ENCODE measurements at regions of chr16 and their contacts with region 1.

Region 1: DNA sequence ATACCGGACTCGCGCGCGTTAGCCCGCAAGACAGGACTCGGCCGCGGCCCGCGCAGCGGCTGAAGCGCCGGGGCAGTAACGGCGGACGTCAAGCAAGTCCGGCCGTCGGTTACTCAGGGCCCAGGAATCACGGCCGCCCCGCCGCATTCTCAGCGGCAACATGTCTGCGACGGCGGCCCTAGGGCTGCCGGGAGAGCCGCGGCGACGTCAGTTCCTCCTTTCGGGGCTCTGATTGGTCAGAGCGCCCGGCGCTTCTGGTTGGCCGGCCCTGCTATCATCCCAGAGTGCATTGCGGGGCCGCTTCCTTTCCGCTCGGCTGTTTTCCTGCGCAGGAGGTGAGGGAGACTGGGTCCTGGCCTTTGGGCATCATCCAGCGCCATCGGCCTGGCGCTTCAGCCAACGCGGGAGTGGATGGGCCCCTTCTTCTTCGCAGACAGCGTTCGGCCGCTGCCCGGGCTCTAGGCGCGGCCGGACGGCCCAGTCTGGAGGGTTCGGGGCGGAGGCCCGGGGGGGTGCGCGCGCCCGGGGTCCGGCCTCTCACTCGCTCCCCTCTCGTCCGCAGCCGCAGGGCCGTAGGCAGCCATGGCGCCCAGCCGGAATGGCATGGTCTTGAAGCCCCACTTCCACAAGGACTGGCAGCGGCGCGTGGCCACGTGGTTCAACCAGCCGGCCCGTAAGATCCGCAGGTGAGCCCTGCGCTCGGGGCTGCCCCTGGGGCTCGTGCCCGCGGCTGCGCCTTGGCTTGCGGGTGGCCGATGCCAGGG is at the start of gene RPL13:
- DNase-seq: peak; percentile 86 to 97 (median 91)
- ATAC-seq: peak; percentile 88
- H3K4me3 ChIP-seq: peak within 1 kb of the TSS; percentile 75
- H3K4me3 Mint-ChIP-seq: peak within 1 kb of the TSS; percentile 97
- H3K27ac ChIP-seq: peak within 1 kb of the TSS; percentile 82 to 90
- H3K27ac Mint-ChIP-seq: peak within 1 kb of the TSS; percentile 99
- H3K4me1 ChIP-seq: peaks cover 68% of the 10 kb centered on the region
- H3K4me1 Mint-ChIP-seq: peaks cover 56% of the 10 kb centered on the region
- H3K27me3 ChIP-seq: peaks cover 0 to 3% of the 10 kb centered on the region in 2 experiments
- H3K27me3 Mint-ChIP-seq: no peaks in the 10 kb centered on the region
- CTCF ChIP-seq: no peak
- total RNA-seq, gene RPL13: 4,971 to 5,051 TPM

Region 2: GRCh38 chr16:89246903-89247733 is 313.4 kb before region 1 on chr16:
- CTCF ChIA-PET with region 1: no interaction called
- POLR2A ChIA-PET with region 1: interaction called, 3 read pairs
- intact Hi-C with region 1: loop called in 1 of 2 experiments (anchors 1 kb)
- DNase-seq: peak; percentile 91 to 100 (median 96)
- ATAC-seq: peak; percentile 91
- H3K4me3 ChIP-seq: peak overlapping the region; percentile 35
- H3K4me3 Mint-ChIP-seq: peak overlapping the region; percentile 82
- H3K27ac ChIP-seq: no peak overlapping the region
- H3K27ac Mint-ChIP-seq: peak overlapping the region; percentile 72
- H3K4me1 ChIP-seq: peaks cover 27% of the 10 kb centered on the region
- H3K4me1 Mint-ChIP-seq: peaks cover 6% of the 10 kb centered on the region
- H3K27me3 ChIP-seq: no peaks in the 10 kb centered on the region
- H3K27me3 Mint-ChIP-seq: no peaks in the 10 kb centered on the region
- CTCF ChIP-seq: no peak

Region 3: DNA sequence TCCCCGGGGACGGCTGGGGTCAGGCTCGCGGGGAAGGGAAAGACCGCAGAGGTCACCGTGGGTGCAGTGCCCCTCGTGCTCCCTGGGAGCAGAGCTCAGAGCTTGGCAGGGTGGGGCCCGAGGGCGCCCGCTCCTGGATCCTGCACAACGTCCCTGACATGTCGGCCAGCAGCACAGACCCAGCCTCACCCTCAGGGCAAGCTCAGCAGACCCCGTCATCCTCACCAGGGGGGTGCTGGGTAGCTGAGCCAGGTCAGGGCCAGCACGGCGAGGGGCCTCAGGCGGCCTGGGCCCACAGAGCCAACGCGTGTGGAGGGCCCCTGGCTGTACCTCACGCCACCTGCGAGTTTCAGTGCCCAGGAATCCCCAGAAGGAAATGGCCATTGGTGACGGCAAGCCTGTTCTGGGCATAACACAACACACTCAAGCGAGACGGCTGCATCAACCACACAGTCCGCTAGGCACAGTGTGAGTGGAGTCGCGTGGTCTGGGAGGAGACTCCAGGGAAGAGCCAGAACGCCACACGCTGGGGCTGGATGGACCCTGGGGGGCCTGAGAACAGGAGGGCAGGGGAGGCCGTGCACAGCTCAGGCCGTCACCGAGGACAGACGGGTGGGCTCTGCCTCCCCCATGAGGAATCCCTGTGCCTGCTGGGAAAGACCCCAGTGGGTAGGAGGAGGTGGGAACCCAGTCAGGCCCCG is 282.8 kb before region 1 on chr16:
- CTCF ChIA-PET with region 1: no interaction called
- POLR2A ChIA-PET with region 1: no interaction called
- intact Hi-C with region 1: no loop called
- DNase-seq: no peak
- ATAC-seq: no peak
- H3K4me3 ChIP-seq: no peak overlapping the region
- H3K4me3 Mint-ChIP-seq: no peak overlapping the region
- H3K27ac ChIP-seq: no peak overlapping the region
- H3K27ac Mint-ChIP-seq: peak overlapping the region; percentile 36
- H3K4me1 ChIP-seq: no peaks in the 10 kb centered on the region
- H3K4me1 Mint-ChIP-seq: no peaks in the 10 kb centered on the region
- H3K27me3 ChIP-seq: no peaks in the 10 kb centered on the region
- H3K27me3 Mint-ChIP-seq: no peaks in the 10 kb centered on the region
- CTCF ChIP-seq: no peak

Region 4: DNA sequence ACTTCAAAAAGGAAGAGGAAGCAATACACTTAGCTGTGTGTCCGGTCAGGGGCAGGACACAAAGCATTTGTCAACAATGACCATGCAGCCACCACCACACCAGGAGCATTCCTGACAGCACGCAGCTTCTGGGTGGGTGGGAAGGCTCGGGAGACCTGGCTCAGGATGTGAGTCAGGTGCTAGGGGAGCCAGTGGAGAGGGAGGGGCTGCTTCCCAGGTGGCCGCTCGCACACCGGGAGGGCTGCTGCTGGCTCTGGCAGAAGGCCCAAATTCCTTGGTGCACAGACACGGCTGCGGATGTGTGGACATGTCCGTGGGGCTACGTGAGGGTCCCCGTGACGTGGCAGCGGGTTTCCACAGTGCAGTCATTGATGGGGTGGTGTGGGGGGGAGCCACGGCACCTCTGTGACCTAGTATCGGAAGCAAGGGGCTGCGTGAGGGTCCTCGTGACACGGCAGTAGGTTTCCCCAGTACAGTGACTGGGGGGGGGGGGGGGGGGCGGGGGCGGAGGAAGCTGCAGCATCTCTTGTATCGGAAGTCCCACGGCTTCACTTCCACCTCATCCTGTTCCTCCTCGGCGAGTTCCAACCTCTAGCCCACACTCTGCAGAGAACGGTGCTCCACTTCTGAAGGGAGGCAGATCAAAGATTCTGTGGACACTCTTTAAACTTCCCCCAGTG is 230.2 kb before region 1 on chr16:
- CTCF ChIA-PET with region 1: interaction called, 6 read pairs
- POLR2A ChIA-PET with region 1: no interaction called
- intact Hi-C with region 1: loop called (anchors 1 to 2 kb)
- DNase-seq: peak in 6 of 14 experiments; percentile 32 to 84 (median 72)
- ATAC-seq: peak; percentile 67
- H3K4me3 ChIP-seq: peak overlapping the region; percentile 13
- H3K4me3 Mint-ChIP-seq: peak overlapping the region; percentile 10
- H3K27ac ChIP-seq: peak overlapping the region; percentile 60 to 67
- H3K27ac Mint-ChIP-seq: peak overlapping the region; percentile 80
- H3K4me1 ChIP-seq: peaks cover 82% of the 10 kb centered on the region
- H3K4me1 Mint-ChIP-seq: peaks cover 84% of the 10 kb centered on the region
- H3K27me3 ChIP-seq: no peaks in the 10 kb centered on the region
- H3K27me3 Mint-ChIP-seq: no peaks in the 10 kb centered on the region
- CTCF ChIP-seq: no peak

Region 5: GRCh38 chr16:89453501-89454321 is 106.8 kb before region 1 on chr16:
- CTCF ChIA-PET with region 1: no interaction called
- POLR2A ChIA-PET with region 1: no interaction called
- intact Hi-C with region 1: no loop called
- DNase-seq: peak in 2 of 14 experiments; percentile 50 to 64
- ATAC-seq: peak; percentile 23
- H3K4me3 ChIP-seq: no peak overlapping the region
- H3K4me3 Mint-ChIP-seq: peak overlapping the region; percentile 27
- H3K27ac ChIP-seq: no peak overlapping the region
- H3K27ac Mint-ChIP-seq: peak overlapping the region; percentile 52
- H3K4me1 ChIP-seq: peaks cover 84% of the 10 kb centered on the region
- H3K4me1 Mint-ChIP-seq: peaks cover 81% of the 10 kb centered on the region
- H3K27me3 ChIP-seq: no peaks in the 10 kb centered on the region
- H3K27me3 Mint-ChIP-seq: no peaks in the 10 kb centered on the region
- CTCF ChIP-seq: no peak

Region 6: DNA sequence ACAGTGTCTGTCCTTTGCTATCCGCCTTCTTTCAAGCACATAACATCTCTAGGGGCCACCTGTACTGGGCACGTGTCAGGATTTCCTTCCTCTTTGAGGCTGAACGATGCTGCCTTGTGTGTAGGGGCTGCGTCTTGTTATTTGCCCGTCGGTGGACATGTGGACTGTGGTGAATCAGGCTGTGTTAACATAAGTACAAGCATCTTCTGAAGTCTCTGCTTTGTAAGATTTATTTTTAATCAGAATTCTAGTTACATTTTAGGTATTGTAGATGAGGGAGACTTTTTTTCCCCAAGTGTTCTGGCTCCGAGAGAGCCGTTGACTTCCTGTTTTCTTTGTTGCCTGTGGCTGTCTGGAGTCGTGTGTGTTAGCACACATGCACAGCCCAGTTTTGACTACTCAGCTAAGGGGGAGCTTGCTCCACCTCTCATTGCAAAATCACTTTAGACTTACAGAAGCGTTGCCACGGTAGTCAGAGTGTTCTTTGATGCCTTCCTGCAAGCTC is 26.3 kb before region 1 on chr16:
- CTCF ChIA-PET with region 1: interaction called, 8 read pairs
- POLR2A ChIA-PET with region 1: interaction called, 7 read pairs
- intact Hi-C with region 1: loop called in 1 of 2 experiments (anchors 1 kb)
- DNase-seq: peak; percentile 25 to 81 (median 48)
- ATAC-seq: peak; percentile 96
- H3K4me3 ChIP-seq: no peak overlapping the region
- H3K4me3 Mint-ChIP-seq: peak overlapping the region; percentile 59
- H3K27ac ChIP-seq: peak overlapping the region; percentile 21 to 51
- H3K27ac Mint-ChIP-seq: peak overlapping the region; percentile 92
- H3K4me1 ChIP-seq: peaks cover 34% of the 10 kb centered on the region
- H3K4me1 Mint-ChIP-seq: peaks cover 23% of the 10 kb centered on the region
- H3K27me3 ChIP-seq: no peaks in the 10 kb centered on the region
- H3K27me3 Mint-ChIP-seq: no peaks in the 10 kb centered on the region
- CTCF ChIP-seq: no peak

Region 7: DNA sequence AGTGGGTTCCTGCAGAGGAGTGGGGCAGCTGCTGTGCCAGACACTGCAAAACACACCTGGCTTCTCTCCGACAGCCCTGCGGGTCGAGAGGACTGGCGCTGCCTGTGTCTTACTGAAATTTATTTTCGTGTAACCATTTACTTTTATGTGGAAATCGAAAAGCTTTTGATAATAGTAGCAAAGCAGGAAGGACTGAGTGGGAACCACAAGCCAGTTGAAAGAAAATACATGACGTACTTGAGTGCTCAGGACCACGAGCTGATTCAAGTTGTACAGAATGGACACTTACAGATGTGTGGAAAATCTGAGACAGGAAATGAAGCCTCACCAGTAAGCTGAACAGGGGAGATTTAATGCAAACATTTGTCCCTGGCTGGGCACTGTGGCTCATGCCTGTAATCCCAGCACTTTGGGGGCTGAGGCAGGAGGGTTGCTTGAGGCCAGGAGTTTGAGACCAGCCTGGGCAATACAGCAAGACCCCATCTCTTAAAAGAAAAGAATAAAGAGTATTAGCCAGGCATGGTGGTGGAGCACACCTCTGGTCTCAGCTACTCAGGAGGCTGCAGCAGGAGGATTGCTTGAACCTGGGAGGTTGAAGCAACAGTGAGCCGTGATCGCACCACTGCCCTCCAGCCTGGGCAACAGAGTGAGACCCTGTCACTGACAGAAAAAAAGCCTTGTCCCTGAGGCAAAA is 11.4 kb before region 1 on chr16:
- CTCF ChIA-PET with region 1: interaction called, 7 read pairs
- POLR2A ChIA-PET with region 1: interaction called, 11 read pairs
- intact Hi-C with region 1: no loop called
- DNase-seq: peak in 6 of 14 experiments; percentile 17 to 67 (median 42)
- ATAC-seq: peak; percentile 87
- H3K4me3 ChIP-seq: no peak overlapping the region
- H3K4me3 Mint-ChIP-seq: peak overlapping the region; percentile 74
- H3K27ac ChIP-seq: peak overlapping the region in 1 of 2 donors; percentile 36
- H3K27ac Mint-ChIP-seq: peak overlapping the region; percentile 91
- H3K4me1 ChIP-seq: peaks cover 19% of the 10 kb centered on the region
- H3K4me1 Mint-ChIP-seq: peaks cover 15% of the 10 kb centered on the region
- H3K27me3 ChIP-seq: no peaks in the 10 kb centered on the region
- H3K27me3 Mint-ChIP-seq: no peaks in the 10 kb centered on the region
- CTCF ChIP-seq: no peak

Region 8: DNA sequence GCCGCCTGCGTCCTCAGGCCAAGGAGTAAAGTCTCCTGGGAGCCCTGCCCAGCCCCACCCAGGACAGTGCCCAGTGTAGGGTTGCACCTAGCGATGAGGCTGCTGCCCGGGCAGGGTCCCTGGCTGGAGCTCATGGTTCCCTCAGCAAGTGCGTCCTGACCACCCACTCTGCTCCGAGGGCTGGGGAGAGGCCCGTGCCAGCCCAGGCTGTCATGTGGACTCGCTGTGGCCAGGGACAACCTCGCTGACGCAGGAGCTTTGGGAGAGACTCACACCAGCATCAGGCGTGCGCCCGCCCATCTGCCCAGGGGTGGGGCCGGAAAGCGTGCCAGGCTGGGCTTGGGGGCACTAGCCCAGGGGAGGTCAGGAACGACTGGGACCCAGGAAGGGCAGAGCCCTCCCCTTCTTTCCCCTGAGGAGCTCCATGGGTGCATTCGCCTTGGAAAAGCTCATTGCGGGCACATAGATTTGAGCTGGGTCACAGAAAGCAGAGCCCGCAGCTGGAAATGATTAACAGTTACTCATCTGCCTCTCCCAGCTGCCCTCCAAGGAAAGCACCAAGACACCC is 72.6 kb after region 1 on chr16:
- CTCF ChIA-PET with region 1: no interaction called
- POLR2A ChIA-PET with region 1: no interaction called
- intact Hi-C with region 1: no loop called
- DNase-seq: no peak
- ATAC-seq: no peak
- H3K4me3 ChIP-seq: no peak overlapping the region
- H3K4me3 Mint-ChIP-seq: no peak overlapping the region
- H3K27ac ChIP-seq: no peak overlapping the region
- H3K27ac Mint-ChIP-seq: no peak overlapping the region
- H3K4me1 ChIP-seq: no peaks in the 10 kb centered on the region
- H3K4me1 Mint-ChIP-seq: no peaks in the 10 kb centered on the region
- H3K27me3 ChIP-seq: peaks cover 0 to 9% of the 10 kb centered on the region in 2 experiments
- H3K27me3 Mint-ChIP-seq: no peaks in the 10 kb centered on the region
- CTCF ChIP-seq: no peak

Region 9: DNA sequence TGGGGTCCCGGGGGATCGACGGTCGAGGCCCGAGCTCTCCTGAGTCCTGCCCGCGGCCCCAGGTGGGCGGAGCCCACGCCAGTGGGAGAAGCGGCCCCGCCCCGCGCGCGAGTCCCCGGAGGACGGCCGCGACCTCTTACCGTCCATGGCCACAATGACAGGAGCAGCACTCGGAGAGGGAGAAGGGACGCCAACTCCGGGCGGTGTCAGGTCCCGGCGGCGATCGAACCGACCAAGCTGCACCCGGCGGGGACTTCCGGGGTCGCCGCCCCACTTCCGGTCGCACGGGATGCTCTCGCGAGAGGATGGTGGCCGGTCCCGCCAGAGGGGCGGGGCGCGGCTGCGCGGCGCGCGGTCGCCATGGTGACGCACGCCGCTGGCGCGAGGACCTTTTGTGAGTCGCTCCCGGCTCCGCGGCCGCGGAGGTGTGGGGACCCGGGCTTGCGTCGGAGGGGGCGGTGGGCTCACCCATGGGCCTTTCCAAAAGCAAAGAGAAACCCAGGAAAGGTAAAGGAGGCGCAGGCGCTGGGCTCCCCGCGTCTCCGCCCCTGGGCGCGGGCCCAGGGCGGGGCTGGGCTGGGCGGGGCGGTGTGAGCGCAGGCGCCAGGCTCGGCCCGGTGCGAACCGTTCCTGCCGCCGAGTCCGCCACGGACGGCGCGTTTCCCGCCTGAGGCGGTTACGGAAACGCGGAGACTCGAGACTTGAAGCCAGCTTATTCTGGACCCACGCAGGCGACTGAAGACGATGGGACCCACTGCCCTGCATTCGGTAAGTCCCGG is 97.1 kb after region 1 on chr16 and contains the starts of genes CHMP1A and SPATA33:
- CTCF ChIA-PET with region 1: no interaction called
- POLR2A ChIA-PET with region 1: no interaction called
- intact Hi-C with region 1: loop called in 1 of 2 experiments (anchors 5 kb)
- DNase-seq: peak; percentile 82 to 97 (median 92)
- ATAC-seq: peak; percentile 88
- H3K4me3 ChIP-seq: peak within 1 kb of the TSS; percentile 91
- H3K4me3 Mint-ChIP-seq: peak within 1 kb of the TSS; percentile 93
- H3K27ac ChIP-seq: peak within 1 kb of the TSS; percentile 55 to 81
- H3K27ac Mint-ChIP-seq: peak within 1 kb of the TSS; percentile 81
- H3K4me1 ChIP-seq: peaks cover 34% of the 10 kb centered on the region
- H3K4me1 Mint-ChIP-seq: peaks cover 34% of the 10 kb centered on the region
- H3K27me3 ChIP-seq: no peaks in the 10 kb centered on the region
- H3K27me3 Mint-ChIP-seq: no peaks in the 10 kb centered on the region
- CTCF ChIP-seq: no peak
- total RNA-seq, gene CHMP1A: 54.7 to 55.9 TPM
- total RNA-seq, gene SPATA33: 4.4 to 7.1 TPM

Measured in CD4-positive, alpha-beta T cell (primary cell).